ENCODE measurements at regions of chr4 and their contacts with region 1.

Region 1: DNA sequence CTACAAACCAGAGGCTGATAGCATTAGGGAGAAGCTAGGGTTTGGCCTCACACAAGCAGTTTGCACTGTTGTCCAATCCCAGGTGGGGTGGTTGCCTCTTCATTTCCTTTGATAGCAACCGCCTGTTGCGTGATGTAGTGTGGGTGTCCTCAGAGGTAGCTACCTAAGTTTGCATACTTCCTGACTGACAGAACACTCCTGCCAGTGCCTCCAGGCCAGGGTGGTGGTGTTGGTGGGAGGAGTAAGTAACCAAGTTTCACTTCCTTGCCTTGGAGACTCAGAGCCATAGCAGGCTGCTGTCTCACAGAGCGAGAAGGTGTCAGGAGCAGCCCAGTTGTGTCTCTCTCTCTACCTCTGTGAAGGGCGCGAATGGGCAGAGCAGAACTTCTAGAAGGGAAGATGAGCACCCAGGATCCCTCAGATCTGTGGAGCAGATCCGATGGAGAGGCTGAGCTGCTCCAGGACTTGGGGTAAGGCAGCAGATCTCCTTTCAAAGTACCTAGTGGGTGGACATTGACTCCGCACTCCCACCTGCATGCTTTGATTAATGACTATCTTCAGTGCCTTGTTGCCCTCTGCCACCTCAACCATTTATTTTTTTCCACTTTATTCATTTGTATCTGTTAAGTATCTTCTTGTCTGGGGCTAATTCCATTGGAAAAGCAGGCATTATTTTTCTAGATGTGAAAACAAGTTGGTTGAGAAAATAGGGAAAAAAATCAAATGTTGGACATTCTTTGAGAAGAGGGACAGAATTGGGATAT is at the start of gene DAPP1:
- DNase-seq: no peak
- ATAC-seq: no peak; the same call in 2 of the 3 replicates
- H3K4me3 ChIP-seq: no peak within 1 kb of the TSS
- H3K27ac ChIP-seq: no peak within 1 kb of the TSS
- H3K4me1 ChIP-seq: peaks cover 11% of the 10 kb centered on the region
- H3K27me3 ChIP-seq: peaks cover 0 to 3% of the 10 kb centered on the region in 2 experiments; a peak in 1 of 5 replicates
- CTCF ChIP-seq: no peak
- EP300 ChIP-seq: no peak
- POLR2A ChIP-seq: no peak
- RAD21 ChIP-seq: no peak
- total RNA-seq, gene DAPP1: not detected in 2 replicates

Region 2: DNA sequence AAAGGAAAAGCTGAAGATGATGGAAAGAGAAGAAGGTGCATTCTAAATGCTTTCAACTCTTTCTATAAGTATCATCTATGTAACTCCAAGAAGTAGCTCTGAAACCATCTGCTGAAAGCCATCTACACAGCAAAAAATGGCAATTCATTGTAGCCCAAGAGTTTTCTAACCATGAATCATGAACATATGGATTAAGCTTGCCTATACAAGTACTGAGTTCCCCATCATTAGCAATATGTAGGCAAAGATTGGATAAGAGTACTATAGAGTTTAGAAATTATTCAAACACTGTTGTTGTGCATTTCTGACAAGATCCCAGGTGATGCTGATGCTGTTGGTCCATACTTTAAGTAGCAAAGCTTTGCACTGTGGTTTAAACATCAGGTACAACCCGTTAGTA is 11.1 kb after region 1 on chr4:
- CTCF ChIA-PET with region 1: no interaction called
- POLR2A ChIA-PET with region 1: no interaction called
- in situ Hi-C with region 1: no loop called
- intact Hi-C with region 1: no loop called
- DNase-seq: no peak
- ATAC-seq: no peak
- H3K4me3 ChIP-seq: no peak overlapping the region
- H3K27ac ChIP-seq: no peak overlapping the region
- H3K4me1 ChIP-seq: no peaks in the 10 kb centered on the region
- H3K27me3 ChIP-seq: peaks cover 0 to 3% of the 10 kb centered on the region in 2 experiments; a peak in 1 of 5 replicates
- CTCF ChIP-seq: no peak
- EP300 ChIP-seq: no peak
- POLR2A ChIP-seq: no peak
- RAD21 ChIP-seq: no peak

Region 3: GRCh38 chr4:99841129-99841528 is 24.4 kb after region 1 on chr4:
- CTCF ChIA-PET with region 1: no interaction called
- POLR2A ChIA-PET with region 1: no interaction called
- in situ Hi-C with region 1: no loop called
- intact Hi-C with region 1: no loop called
- DNase-seq: no peak
- ATAC-seq: no peak
- H3K4me3 ChIP-seq: no peak overlapping the region
- H3K27ac ChIP-seq: no peak overlapping the region
- H3K4me1 ChIP-seq: no peaks in the 10 kb centered on the region
- H3K27me3 ChIP-seq: peaks cover 0 to 3% of the 10 kb centered on the region in 2 experiments; a peak in 1 of 5 replicates
- CTCF ChIP-seq: no peak
- EP300 ChIP-seq: no peak
- POLR2A ChIP-seq: no peak
- RAD21 ChIP-seq: no peak

Region 4: DNA sequence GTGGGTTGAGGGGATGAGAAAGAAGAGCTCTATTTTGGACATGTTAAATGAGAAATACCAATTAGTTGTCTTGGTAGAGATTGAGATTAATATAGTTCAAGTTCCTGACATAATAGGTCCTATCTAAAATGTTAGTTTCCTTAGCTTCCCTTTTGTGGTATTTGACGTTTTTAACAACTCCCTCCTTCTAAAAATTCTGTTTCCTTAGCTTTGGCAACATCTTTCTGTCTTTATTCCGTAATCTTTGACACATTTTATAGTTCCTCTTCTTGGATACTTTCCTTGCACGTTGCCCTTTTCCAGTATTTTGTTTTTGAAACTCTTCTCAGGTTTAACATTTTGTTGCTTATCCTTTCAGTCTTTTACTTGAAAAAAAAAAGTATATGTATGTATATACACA is 40.6 kb after region 1 on chr4:
- CTCF ChIA-PET with region 1: no interaction called
- POLR2A ChIA-PET with region 1: no interaction called
- in situ Hi-C with region 1: no loop called
- intact Hi-C with region 1: loop called (anchors 1 kb)
- DNase-seq: no peak
- ATAC-seq: no peak
- H3K4me3 ChIP-seq: no peak overlapping the region
- H3K27ac ChIP-seq: no peak overlapping the region
- H3K4me1 ChIP-seq: no peaks in the 10 kb centered on the region
- H3K27me3 ChIP-seq: no peaks in the 10 kb centered on the region; a peak in 1 of 5 replicates
- CTCF ChIP-seq: no peak
- EP300 ChIP-seq: no peak
- POLR2A ChIP-seq: no peak
- RAD21 ChIP-seq: no peak